ENCODE measurements at regions of chr17 and their contacts with region 1.

Region 1: GRCh38 chr17:40791787-40792436 is 7.8 kb downstream of the KRT28 start:
- DNase-seq: no peak
- H3K4me3 ChIP-seq: no peak overlapping the region
- H3K27ac ChIP-seq: no peak overlapping the region
- H3K4me1 ChIP-seq: no peaks in the 10 kb centered on the region
- H3K27me3 ChIP-seq: no peaks in the 10 kb centered on the region
- CTCF ChIP-seq: peak; percentile 46 to 84 (median 70)
- POLR2A ChIP-seq: no peak

Region 2: GRCh38 chr17:40615295-40615988 is 176.5 kb before region 1 on chr17:
- intact Hi-C with region 1: loop called (anchors 5 kb)
- DNase-seq: peak; percentile 54 to 57
- H3K4me3 ChIP-seq: no peak overlapping the region
- H3K27ac ChIP-seq: no peak overlapping the region
- H3K4me1 ChIP-seq: peaks cover 0 to 6% of the 10 kb centered on the region in 2 donors
- H3K27me3 ChIP-seq: no peaks in the 10 kb centered on the region
- CTCF ChIP-seq: peak in 5 of 6 experiments; percentile 14 to 46 (median 38)
- POLR2A ChIP-seq: no peak